ENCODE measurements at regions of chr19 and their contacts with region 1.

Region 1: DNA sequence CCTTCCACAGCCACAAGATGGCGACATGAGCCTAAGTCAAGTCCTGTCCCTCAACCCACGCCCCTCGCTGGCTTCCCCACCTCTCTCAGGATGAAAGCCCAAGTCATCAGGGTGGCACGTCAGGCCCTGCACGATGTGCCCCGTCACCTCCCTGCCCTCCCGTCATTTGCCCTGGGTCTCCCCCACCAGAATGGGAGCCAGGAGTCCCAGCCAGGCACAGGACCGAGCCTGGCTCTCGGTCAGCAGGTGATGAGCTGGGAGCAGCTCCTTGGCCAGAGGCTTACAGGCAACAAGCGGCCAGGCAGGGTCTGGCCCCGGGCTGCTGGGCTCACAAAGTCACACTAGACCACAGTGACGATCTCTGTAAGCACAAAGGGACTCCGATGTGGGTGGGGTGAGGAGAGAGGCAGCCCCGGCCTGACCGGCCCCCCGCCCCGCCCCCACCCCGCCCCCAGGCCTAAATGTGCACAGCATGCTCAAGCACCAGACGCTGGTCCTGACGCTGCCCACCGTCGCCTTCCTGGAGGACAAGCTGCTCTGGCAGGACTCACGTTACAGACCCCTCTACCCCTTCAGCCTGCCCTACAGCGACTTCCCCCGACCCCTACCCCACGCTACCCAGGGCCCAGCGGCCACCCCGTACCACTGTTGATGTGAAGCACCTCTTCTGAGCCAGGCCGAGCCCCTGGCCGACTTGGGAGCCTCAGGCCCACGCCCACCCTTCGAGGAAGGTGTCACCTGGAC is 7.3 kb downstream of the MRPL4 start:
- DNase-seq: peak; percentile 77 to 91 (median 79)
- H3K4me3 ChIP-seq: no peak overlapping the region
- H3K4me3 Mint-ChIP-seq: peak overlapping the region in 1 of 7 donors; percentile 81
- H3K27ac ChIP-seq: no peak overlapping the region
- H3K27ac Mint-ChIP-seq: peak overlapping the region in 3 of 8 donors; percentile 12 to 95 (median 38)
- H3K4me1 ChIP-seq: no peaks in the 10 kb centered on the region
- H3K4me1 Mint-ChIP-seq: peaks cover 0 to 23% (median 0%) of the 10 kb centered on the region in 3 donors
- H3K27me3 ChIP-seq: no peaks in the 10 kb centered on the region
- H3K27me3 Mint-ChIP-seq: no peaks in the 10 kb centered on the region

Region 2: GRCh38 chr19:10074153-10074552 is 185.2 kb before region 1 on chr19:
- CTCF ChIA-PET with region 1: no interaction called
- POLR2A ChIA-PET with region 1: no interaction called
- DNase-seq: peak; percentile 15 to 66 (median 57)
- H3K4me3 ChIP-seq: no peak overlapping the region
- H3K4me3 Mint-ChIP-seq: no peak overlapping the region
- H3K27ac ChIP-seq: no peak overlapping the region
- H3K27ac Mint-ChIP-seq: peak overlapping the region in 3 of 8 donors; percentile 9 to 54 (median 17)
- H3K4me1 ChIP-seq: no peaks in the 10 kb centered on the region
- H3K4me1 Mint-ChIP-seq: no peaks in the 10 kb centered on the region
- H3K27me3 ChIP-seq: no peaks in the 10 kb centered on the region
- H3K27me3 Mint-ChIP-seq: no peaks in the 10 kb centered on the region

Region 3: GRCh38 chr19:10332955-10333757 is 73.8 kb after region 1 on chr19 and contains the start of gene RAVER1:
- CTCF ChIA-PET with region 1: interaction called, 5 read pairs
- POLR2A ChIA-PET with region 1: interaction called, 12 read pairs
- DNase-seq: peak; percentile 96 to 99 (median 98)
- H3K4me3 ChIP-seq: peak within 1 kb of the TSS; percentile 93
- H3K4me3 Mint-ChIP-seq: peak within 1 kb of the TSS; percentile 90 to 99 (median 96)
- H3K27ac ChIP-seq: peak within 1 kb of the TSS; percentile 84
- H3K27ac Mint-ChIP-seq: peak within 1 kb of the TSS; percentile 90 to 98 (median 95)
- H3K4me1 ChIP-seq: peaks cover 26% of the 10 kb centered on the region
- H3K4me1 Mint-ChIP-seq: peaks cover 19 to 47% (median 26%) of the 10 kb centered on the region in 3 donors
- H3K27me3 ChIP-seq: no peaks in the 10 kb centered on the region
- H3K27me3 Mint-ChIP-seq: no peaks in the 10 kb centered on the region
- total RNA-seq, gene RAVER1: 91.5 to 98.5 TPM

Region 4: GRCh38 chr19:10395003-10395402 is 135.7 kb after region 1 on chr19:
- CTCF ChIA-PET with region 1: interaction called, 355 read pairs
- POLR2A ChIA-PET with region 1: interaction called, 3 read pairs
- DNase-seq: no peak
- H3K4me3 ChIP-seq: no peak overlapping the region
- H3K4me3 Mint-ChIP-seq: no peak overlapping the region
- H3K27ac ChIP-seq: no peak overlapping the region
- H3K27ac Mint-ChIP-seq: no peak overlapping the region
- H3K4me1 ChIP-seq: no peaks in the 10 kb centered on the region
- H3K4me1 Mint-ChIP-seq: peaks cover 6 to 16% (median 15%) of the 10 kb centered on the region in 3 donors
- H3K27me3 ChIP-seq: no peaks in the 10 kb centered on the region
- H3K27me3 Mint-ChIP-seq: no peaks in the 10 kb centered on the region

Measured in CD8-positive, alpha-beta memory T cell (primary cell).